Calu3 (cell line): ENCODE measurements at regions of chr1 and their contacts with region 1.

Region 1: GRCh38 chr1:147129116-147129873 is 43.0 kb downstream of the PRKAB2 start:
- DNase-seq: no peak
- H3K4me3 Mint-ChIP-seq: no peak overlapping the region
- H3K27ac Mint-ChIP-seq: no peak overlapping the region
- H3K4me1 Mint-ChIP-seq: no peaks in the 10 kb centered on the region
- H3K27me3 Mint-ChIP-seq: peaks cover 23% of the 10 kb centered on the region
- CTCF ChIP-seq: no peak

Region 2: GRCh38 chr1:147142886-147143285 is 13.6 kb after region 1 on chr1:
- CTCF ChIA-PET with region 1: no interaction called
- intact Hi-C with region 1: loop called (anchors 1 kb)
- DNase-seq: no peak
- H3K4me3 Mint-ChIP-seq: no peak overlapping the region
- H3K27ac Mint-ChIP-seq: no peak overlapping the region
- H3K4me1 Mint-ChIP-seq: no peaks in the 10 kb centered on the region
- H3K27me3 Mint-ChIP-seq: peaks cover 30% of the 10 kb centered on the region
- CTCF ChIP-seq: no peak

Region 3: GRCh38 chr1:147225193-147225730 is 96.0 kb after region 1 on chr1 and contains the start of gene FMO5:
- CTCF ChIA-PET with region 1: no interaction called
- intact Hi-C with region 1: no loop called
- DNase-seq: peak; percentile 58
- H3K4me3 Mint-ChIP-seq: peak within 1 kb of the TSS; percentile 91
- H3K27ac Mint-ChIP-seq: peak within 1 kb of the TSS; percentile 47
- H3K4me1 Mint-ChIP-seq: peaks cover 22% of the 10 kb centered on the region
- H3K27me3 Mint-ChIP-seq: peaks cover 14% of the 10 kb centered on the region
- CTCF ChIP-seq: no peak
- total RNA-seq, gene FMO5: 0.61 and 1.0 TPM in 2 replicates